ENCODE measurements at regions of chr11 and their contacts with region 1.

Region 1: DNA sequence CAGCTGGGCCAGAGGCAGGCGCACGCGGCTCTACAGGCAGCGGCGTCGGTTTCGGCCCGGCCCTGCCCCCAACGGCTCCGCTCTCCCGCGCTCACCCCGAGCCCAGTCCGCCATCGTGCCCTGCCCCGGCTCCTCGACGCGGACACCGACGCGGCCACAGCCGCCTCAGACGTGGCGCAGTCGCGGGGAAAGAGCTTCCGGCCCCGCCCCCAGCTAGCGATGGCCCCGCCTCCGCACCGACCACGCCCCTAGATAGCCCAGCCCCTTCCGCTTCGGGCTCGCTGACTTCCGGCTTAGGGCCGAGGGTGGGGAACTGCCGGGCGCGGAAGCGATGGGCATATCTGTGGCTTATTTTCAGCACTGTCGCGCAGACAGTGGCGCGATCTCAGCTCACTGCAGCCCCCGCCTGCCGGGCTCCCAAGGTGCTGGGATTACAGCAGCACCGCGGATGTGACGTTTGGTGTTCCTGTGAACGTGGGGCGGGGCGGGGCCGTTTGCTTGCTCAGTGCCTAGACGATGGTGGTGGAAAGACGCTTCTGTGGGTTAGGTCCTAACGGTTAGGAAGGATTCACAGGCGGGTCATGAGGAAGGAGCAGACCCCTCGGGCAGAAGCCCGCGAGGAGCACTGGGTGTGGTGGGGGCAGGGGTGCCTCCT is at the starts of genes BET1L and RIC8A:
- DNase-seq: peak; percentile 98
- H3K4me3 Mint-ChIP-seq: peak within 1 kb of the TSS; percentile 100
- H3K27ac Mint-ChIP-seq: peak within 1 kb of the TSS; percentile 100
- H3K4me1 Mint-ChIP-seq: peaks cover 26% of the 10 kb centered on the region
- H3K27me3 Mint-ChIP-seq: no peaks in the 10 kb centered on the region
- total RNA-seq, gene BET1L: 43.7 and 46.3 TPM in 2 replicates
- total RNA-seq, gene RIC8A: 109 and 110 TPM in 2 replicates

Region 2: GRCh38 chr11:250740-251299 is 43.5 kb after region 1 on chr11:
- intact Hi-C with region 1: no loop called
- DNase-seq: peak; percentile 70
- H3K4me3 Mint-ChIP-seq: no peak overlapping the region
- H3K27ac Mint-ChIP-seq: no peak overlapping the region
- H3K4me1 Mint-ChIP-seq: peaks cover 13% of the 10 kb centered on the region
- H3K27me3 Mint-ChIP-seq: no peaks in the 10 kb centered on the region

Region 3: DNA sequence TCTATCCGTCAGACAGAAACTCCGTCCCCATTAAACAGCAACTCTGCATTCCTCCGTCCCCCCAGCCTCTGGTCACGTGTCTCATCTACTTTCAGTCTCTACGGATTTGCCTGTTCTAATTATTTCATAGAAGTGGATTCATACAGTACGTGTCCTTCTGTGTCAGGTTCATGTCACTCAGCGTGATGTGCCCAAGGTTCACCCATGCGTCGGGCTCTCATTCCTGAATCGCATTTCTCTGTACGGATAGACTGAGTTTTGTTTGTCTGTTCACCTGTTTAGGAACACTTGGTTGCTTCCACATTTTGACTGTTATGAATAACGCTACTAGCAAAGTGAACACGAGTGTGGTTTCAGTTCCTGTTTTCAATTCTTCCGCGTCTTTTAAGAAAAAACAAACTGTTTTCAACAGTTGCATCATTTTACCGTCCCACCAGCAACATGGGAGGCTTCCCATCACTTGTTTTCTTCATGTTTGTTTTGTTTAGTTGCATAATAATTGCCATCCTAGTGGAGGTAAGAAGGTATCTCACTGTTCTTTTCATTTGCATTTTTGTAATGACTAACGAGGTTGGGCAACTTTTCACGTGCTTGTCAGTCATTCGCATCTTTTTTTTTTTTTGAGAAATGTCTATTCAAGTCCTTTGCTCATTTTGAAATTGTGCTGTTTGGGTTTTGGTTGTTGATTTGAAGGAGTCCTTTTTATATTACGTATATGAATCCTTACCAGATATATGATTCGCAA is 62.0 kb after region 1 on chr11:
- intact Hi-C with region 1: loop called (anchors 1 kb)
- DNase-seq: peak; percentile 55
- H3K4me3 Mint-ChIP-seq: peak overlapping the region; percentile 89
- H3K27ac Mint-ChIP-seq: peak overlapping the region; percentile 97
- H3K4me1 Mint-ChIP-seq: peaks cover 34% of the 10 kb centered on the region
- H3K27me3 Mint-ChIP-seq: peaks cover 8% of the 10 kb centered on the region

Region 4: DNA sequence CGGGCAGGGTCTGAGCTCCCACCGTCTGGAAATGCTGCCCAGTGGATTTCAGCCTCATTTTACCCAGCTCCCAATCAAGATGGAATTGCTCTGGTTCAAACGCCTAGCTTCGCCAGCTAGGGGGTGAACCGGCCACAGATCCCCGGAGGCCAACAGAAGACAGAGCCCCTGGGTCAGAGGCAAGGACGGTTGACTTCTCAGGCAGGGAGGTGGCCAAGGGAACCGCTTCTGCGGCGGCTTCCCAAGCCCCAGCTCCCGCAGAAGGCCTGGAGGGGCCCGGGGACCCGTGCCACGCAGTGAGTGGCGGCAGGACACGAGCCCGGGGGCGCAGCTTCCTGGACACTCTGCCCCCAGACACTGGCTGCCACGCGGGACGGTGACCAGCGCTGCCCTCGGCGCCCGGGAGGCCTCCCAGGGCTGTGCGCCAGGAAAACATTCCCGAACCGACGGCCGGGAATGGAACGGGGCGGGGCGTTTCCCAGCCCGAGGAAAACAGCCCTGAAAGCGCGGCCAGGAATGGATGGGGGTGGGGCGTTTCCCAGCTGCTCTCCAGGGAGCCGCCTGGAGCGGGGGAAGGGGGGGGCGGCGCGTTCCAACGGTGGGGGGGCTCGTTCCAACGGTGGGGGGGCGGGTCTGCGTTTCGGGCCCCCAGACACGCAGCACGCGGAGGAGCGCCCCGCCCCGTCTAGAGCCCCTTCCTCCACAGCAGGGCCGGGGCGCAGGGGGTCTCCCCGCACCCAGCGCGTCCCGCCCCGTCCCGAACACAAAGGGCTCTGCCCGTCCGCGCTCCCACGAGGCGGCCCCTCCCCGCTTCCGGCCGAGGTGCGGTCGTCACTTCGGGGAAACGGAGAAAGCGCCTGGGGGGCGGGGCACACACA is 148.5 kb after region 1 on chr11:
- intact Hi-C with region 1: loop called (anchors 5 kb)
- DNase-seq: peak; percentile 85
- H3K4me3 Mint-ChIP-seq: peak overlapping the region; percentile 86
- H3K27ac Mint-ChIP-seq: peak overlapping the region; percentile 94
- H3K4me1 Mint-ChIP-seq: peaks cover 27% of the 10 kb centered on the region
- H3K27me3 Mint-ChIP-seq: peaks cover 2% of the 10 kb centered on the region

Region 5: DNA sequence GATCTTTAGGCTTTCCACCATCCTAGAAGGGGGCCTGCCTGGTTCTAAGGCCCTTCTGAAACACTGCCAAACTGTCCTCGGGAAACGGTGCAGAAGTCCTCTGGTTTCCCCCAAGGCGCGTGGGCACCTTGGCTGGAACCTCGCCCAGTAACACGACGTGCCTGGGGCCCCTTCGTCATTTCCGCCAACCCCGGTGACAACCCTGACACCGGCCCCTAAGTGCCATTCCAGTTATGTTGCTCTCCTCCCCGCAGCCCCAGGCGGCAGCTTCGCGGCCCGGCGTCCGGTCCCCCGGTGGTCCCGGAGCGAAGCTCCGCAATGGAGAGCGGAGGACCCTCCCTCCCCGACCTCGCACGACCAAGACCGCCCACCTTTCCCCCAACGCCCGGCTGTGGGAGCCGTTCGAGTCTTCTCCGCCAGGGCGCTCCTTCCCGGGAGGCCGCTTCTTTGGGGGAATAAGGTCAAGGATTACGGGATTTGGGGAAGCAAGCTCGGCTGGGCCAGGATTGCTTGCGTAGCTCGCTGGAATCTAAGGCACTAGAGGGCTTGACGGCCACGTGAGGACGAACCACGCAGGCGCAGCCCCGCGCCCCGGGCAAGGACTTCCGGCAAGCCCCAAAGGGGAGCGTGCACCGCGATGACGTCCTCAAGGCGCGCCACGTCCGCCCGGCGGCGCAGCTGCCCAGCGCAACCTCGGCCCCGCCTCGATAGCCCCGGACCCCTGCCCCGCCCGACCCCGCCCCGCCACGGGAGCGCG is 299.1 kb after region 1 on chr11:
- intact Hi-C with region 1: loop called (anchors 2 kb)
- DNase-seq: peak; percentile 96
- H3K4me3 Mint-ChIP-seq: peak overlapping the region; percentile 95
- H3K27ac Mint-ChIP-seq: peak overlapping the region; percentile 99
- H3K4me1 Mint-ChIP-seq: peaks cover 17% of the 10 kb centered on the region
- H3K27me3 Mint-ChIP-seq: no peaks in the 10 kb centered on the region

Measured in activated T-helper 2 cell treated with anti-CD3 and anti-CD28 coated beads, Interferon-gamma antibody, Interleukin-2, Interleukin-4, amounts not matched to agents 10 μg/mL and 5 μg/mL and 100 μg/mL, durations not matched to agents 14 hours and 24 hours and 36 hours (primary cell).